Heart left ventricle (tissue), 16 donors: ENCODE measurements at regions of chr17 and their contacts with region 1.

Region 1: GRCh38 chr17:55527540-55528118 is 16.4 kb upstream of the SMIM36 start:
- DNase-seq: peak in 1 of 5 donors; percentile 14
- ATAC-seq: peak in 3 of 4 donors; percentile 59 to 84 (median 82)
- H3K4me3 ChIP-seq: no peak overlapping the region
- H3K27ac ChIP-seq: no peak overlapping the region
- H3K4me1 ChIP-seq: no peaks in the 10 kb centered on the region
- H3K27me3 ChIP-seq: peaks cover 0 to 3% (median 0%) of the 10 kb centered on the region in 9 donors
- CTCF ChIP-seq: peak; percentile 18 to 64 (median 57)
- POLR2A ChIP-seq: no peak

Region 2: DNA sequence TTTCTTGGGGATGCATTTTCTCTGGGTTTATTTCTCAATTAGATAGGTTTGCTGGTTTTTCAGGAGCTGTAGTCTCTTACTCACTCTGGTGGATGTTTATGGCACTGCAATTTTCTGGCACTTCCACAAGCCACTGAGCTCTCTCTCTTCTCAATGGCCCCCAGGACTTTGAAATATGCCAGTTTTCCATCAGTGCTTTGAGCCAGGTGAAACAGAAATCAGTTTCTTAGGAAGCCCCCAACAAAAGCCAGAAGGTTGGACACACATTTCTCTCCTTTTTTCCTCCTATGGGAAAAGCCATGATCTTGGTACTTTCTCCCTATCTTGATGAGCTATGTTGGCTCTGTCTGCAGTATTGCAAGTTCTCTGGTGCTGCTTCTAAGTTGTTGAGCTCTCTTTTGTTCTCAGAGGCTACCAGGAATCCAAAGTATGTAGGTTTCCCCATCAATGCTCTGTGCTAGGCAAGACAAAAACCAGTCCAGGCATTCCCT is 74.3 kb after region 1 on chr17:
- intact Hi-C with region 1: loop called in 7 of 10 experiments (anchors 1 to 10 kb)
- DNase-seq: no peak
- ATAC-seq: no peak
- H3K4me3 ChIP-seq: no peak overlapping the region
- H3K27ac ChIP-seq: no peak overlapping the region
- H3K4me1 ChIP-seq: no peaks in the 10 kb centered on the region
- H3K27me3 ChIP-seq: no peaks in the 10 kb centered on the region
- CTCF ChIP-seq: peak; percentile 17 to 56 (median 44)
- POLR2A ChIP-seq: no peak

Region 3: DNA sequence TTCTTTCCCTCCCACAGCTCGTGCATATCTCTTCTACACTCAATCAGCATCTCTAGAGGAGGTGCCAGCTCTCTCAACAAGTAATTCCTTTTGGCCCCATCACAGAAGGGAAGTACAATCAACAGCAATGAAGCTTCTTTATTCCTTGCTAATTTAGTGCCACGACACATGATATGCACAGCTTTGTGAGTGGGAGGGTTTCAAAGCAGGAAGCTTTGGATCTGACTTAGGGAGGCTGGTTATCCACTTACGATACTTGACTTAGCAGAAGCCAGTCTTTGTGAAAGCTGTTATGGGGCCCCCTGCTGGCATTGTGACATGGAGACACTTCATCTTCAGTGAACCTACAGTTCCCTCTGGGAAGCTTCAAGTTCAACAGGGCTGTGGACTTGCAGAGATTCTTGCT is 114.0 kb after region 1 on chr17:
- intact Hi-C with region 1: loop called (anchors 1 to 5 kb)
- DNase-seq: peak; percentile 61 to 74 (median 67)
- ATAC-seq: peak in 3 of 4 donors; percentile 56 to 82 (median 71)
- H3K4me3 ChIP-seq: no peak overlapping the region
- H3K27ac ChIP-seq: no peak overlapping the region
- H3K4me1 ChIP-seq: peaks cover 0 to 12% (median 0%) of the 10 kb centered on the region in 12 donors
- H3K27me3 ChIP-seq: peaks cover 0 to 38% (median 0%) of the 10 kb centered on the region in 9 donors
- CTCF ChIP-seq: peak; percentile 42 to 71 (median 57)
- POLR2A ChIP-seq: no peak

Region 4: DNA sequence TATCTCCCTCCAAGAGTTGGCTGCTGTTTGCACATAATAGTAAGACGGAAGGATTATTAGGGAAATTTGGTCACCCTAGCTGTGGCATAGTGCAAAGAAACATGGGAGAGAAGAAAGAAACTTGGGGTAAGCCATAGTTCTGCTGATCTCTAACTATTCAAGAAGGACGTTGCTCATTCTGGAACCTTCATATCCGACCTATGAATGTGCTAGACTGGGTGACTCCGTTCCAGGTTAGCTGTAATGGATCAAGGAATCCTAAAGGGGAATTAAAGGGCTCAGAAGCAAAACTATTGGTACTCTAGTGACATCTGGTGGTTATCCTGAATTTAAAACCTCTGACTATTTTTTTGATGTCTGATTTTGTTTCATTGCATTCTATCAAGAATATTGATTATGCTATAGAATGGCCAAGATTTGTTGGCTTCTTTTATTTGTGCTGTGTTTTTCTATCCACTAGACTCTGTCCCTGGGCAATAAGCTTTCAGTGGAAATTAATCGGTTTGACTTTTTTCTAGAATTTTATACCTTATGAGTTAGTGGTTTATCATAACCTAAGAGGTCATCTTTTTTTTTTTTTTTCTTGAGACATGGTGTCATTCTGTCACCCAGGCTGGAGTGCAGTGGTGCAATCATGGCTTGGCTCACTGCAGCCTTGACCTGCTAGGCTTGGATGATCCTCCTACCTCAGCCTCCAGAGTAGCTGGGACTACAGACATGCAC is 242.7 kb after region 1 on chr17:
- intact Hi-C with region 1: loop called (anchors 1 to 2 kb)
- DNase-seq: no peak
- ATAC-seq: peak; percentile 42 to 78 (median 49)
- H3K4me3 ChIP-seq: no peak overlapping the region
- H3K27ac ChIP-seq: peak overlapping the region in 1 of 12 donors; percentile 66
- H3K4me1 ChIP-seq: peaks cover 0 to 15% (median 4%) of the 10 kb centered on the region in 12 donors
- H3K27me3 ChIP-seq: no peaks in the 10 kb centered on the region
- CTCF ChIP-seq: peak; percentile 47 to 77 (median 62)
- POLR2A ChIP-seq: no peak

Region 5: GRCh38 chr17:56592487-56593085 is 1065.0 kb after region 1 on chr17:
- intact Hi-C with region 1: loop called in 1 of 10 experiments (anchors 10 kb)
- DNase-seq: peak; percentile 35 to 86 (median 59)
- ATAC-seq: peak; percentile 55 to 85 (median 82)
- H3K4me3 ChIP-seq: peak overlapping the region; percentile 42 to 71 (median 56)
- H3K27ac ChIP-seq: no peak overlapping the region
- H3K4me1 ChIP-seq: peaks cover 4 to 56% (median 22%) of the 10 kb centered on the region in 12 donors
- H3K27me3 ChIP-seq: peaks cover 5 to 69% (median 37%) of the 10 kb centered on the region in 9 donors
- CTCF ChIP-seq: peak; percentile 72 to 99 (median 97)
- POLR2A ChIP-seq: no peak